Aorta (tissue), 5 donors: ENCODE measurements at regions of chr19 and their contacts with region 1.

Region 1: GRCh38 chr19:40529093-40529954 is 47.3 kb upstream of the SHKBP1 start:
- DNase-seq: peak; percentile 88 to 96
- ATAC-seq: peak; percentile 95
- H3K4me3 ChIP-seq: peak overlapping the region; percentile 37 to 42
- H3K27ac ChIP-seq: no peak overlapping the region
- H3K4me1 ChIP-seq: no peaks in the 10 kb centered on the region
- H3K27me3 ChIP-seq: no peaks in the 10 kb centered on the region

Region 2: GRCh38 chr19:40348961-40349507 is 180.3 kb before region 1 on chr19:
- intact Hi-C with region 1: no loop called
- DNase-seq: no peak
- ATAC-seq: no peak
- H3K4me3 ChIP-seq: peak overlapping the region; percentile 46 to 71
- H3K27ac ChIP-seq: no peak overlapping the region
- H3K4me1 ChIP-seq: peaks cover 0 to 4% of the 10 kb centered on the region in 2 donors
- H3K27me3 ChIP-seq: no peaks in the 10 kb centered on the region

Region 3: DNA sequence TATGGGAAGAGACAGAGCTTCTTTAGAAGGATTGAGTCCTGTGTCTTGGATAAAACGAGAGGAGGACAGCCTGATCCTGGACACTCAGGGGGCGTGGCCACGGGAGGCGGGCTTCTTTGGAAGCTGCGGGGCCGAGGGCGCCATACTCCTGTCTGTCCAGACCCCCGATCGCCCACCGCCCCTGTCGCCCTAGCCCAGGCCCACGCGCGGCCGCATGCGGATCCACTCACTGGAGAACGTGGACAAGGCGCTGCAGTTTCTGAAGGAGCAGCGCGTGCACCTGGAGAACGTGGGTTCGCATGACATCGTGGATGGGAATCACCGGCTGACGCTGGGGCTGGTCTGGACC is 39.5 kb before region 1 on chr19:
- intact Hi-C with region 1: no loop called
- DNase-seq: no peak
- ATAC-seq: no peak
- H3K4me3 ChIP-seq: no peak overlapping the region
- H3K27ac ChIP-seq: no peak overlapping the region
- H3K4me1 ChIP-seq: no peaks in the 10 kb centered on the region
- H3K27me3 ChIP-seq: no peaks in the 10 kb centered on the region

Region 4: GRCh38 chr19:40576585-40577451 is 47.5 kb after region 1 on chr19 and contains the start of gene SHKBP1:
- intact Hi-C with region 1: loop called in 1 of 2 experiments (anchors 5 kb)
- DNase-seq: peak; percentile 97 to 98
- ATAC-seq: peak; percentile 95
- H3K4me3 ChIP-seq: peak within 1 kb of the TSS; percentile 65 to 93
- H3K27ac ChIP-seq: no peak within 1 kb of the TSS
- H3K4me1 ChIP-seq: no peaks in the 10 kb centered on the region
- H3K27me3 ChIP-seq: no peaks in the 10 kb centered on the region
- total RNA-seq, gene SHKBP1: 54.0 to 75.3 TPM

Region 5: DNA sequence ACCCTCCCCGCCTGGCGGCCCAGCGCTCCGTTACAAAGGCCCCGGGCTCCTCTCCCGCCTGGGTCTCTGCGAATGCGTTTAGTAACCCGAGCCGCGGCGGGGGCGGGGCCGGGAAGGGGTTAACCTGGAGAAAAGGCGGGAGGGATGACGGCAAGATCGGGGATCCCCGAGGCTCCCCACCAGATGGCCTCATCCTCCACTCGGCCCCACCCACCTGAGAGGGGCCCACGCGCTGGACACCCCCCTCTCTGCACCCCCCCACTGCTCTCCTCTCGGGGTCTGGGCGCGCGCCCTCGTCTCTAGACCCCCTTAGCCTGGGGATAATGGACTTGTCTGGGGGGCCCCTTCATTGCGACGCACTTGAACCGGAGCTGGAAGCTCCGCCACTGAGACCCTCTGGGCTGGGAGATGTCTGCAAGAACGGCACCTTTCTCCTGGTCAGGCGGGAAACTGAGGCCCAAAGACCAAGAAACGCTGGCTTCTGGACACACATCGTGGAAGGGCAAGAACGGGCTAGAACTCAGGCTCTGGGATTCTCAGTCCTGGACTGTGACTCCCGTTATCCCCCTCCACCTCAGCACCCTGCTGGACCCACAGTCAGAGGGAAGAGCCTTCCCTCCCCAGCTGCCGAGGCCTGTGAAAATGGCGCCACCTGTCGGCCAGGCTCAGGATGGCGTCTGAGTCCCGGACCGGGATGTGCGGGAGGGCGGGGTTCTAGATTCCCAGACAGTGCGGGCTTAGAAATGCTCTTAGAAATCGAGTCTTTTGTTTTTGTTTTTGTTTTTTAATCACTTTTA is 69.0 kb after region 1 on chr19:
- intact Hi-C with region 1: loop called (anchors 2 to 5 kb)
- DNase-seq: peak; percentile 91 to 97
- ATAC-seq: peak; percentile 84
- H3K4me3 ChIP-seq: no peak overlapping the region
- H3K27ac ChIP-seq: no peak overlapping the region
- H3K4me1 ChIP-seq: no peaks in the 10 kb centered on the region
- H3K27me3 ChIP-seq: no peaks in the 10 kb centered on the region

Region 6: DNA sequence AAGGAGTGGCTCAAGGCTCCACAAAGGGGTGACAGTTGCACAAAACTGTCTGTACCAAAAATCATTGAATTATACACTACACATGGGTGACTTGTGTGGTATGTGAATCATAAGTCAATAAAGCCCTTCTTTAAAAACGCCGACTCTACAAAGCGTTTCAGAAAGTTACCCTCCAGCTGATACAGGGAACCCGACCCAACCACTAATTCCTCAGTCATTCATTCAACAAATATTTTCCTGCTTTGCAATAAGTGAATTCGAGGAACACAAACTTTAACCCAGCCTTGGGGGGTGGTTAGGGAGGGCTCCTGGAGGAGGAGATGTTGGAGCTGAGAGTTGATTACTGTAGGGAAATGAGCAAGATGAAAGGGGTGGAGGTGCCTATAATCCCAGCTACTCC is 103.9 kb after region 1 on chr19:
- intact Hi-C with region 1: loop called (anchors 5 to 10 kb)
- DNase-seq: no peak
- ATAC-seq: no peak
- H3K4me3 ChIP-seq: no peak overlapping the region
- H3K27ac ChIP-seq: peak overlapping the region in 1 of 2 donors; percentile 19
- H3K4me1 ChIP-seq: no peaks in the 10 kb centered on the region
- H3K27me3 ChIP-seq: no peaks in the 10 kb centered on the region

Region 7: DNA sequence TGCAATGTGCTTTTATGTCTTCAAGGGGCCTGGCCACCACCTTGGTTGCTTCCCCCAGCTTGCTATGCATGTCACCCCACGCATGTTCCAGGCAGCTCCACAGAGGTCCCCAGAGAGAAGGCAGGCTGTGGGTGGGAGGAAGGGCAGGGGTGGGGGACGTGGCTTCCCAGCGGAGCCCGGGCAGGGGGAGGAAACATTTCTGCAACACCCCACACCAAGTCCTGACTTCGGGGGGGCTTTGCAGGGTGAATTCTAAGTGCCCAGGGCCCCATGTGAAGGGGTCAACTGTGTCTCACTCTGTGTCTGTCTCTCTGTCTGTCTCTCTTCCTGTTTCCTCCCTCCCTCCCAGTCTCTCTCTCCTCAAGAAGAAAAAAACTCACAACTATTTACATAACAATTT is 111.4 kb after region 1 on chr19:
- intact Hi-C with region 1: loop called (anchors 5 to 10 kb)
- DNase-seq: peak in 1 of 2 donors; percentile 66
- ATAC-seq: peak; percentile 41
- H3K4me3 ChIP-seq: no peak overlapping the region
- H3K27ac ChIP-seq: peak overlapping the region; percentile 79 to 80
- H3K4me1 ChIP-seq: no peaks in the 10 kb centered on the region
- H3K27me3 ChIP-seq: no peaks in the 10 kb centered on the region